B cell (primary cell): ENCODE measurements at regions of chr19 and their contacts with region 1.

Region 1: DNA sequence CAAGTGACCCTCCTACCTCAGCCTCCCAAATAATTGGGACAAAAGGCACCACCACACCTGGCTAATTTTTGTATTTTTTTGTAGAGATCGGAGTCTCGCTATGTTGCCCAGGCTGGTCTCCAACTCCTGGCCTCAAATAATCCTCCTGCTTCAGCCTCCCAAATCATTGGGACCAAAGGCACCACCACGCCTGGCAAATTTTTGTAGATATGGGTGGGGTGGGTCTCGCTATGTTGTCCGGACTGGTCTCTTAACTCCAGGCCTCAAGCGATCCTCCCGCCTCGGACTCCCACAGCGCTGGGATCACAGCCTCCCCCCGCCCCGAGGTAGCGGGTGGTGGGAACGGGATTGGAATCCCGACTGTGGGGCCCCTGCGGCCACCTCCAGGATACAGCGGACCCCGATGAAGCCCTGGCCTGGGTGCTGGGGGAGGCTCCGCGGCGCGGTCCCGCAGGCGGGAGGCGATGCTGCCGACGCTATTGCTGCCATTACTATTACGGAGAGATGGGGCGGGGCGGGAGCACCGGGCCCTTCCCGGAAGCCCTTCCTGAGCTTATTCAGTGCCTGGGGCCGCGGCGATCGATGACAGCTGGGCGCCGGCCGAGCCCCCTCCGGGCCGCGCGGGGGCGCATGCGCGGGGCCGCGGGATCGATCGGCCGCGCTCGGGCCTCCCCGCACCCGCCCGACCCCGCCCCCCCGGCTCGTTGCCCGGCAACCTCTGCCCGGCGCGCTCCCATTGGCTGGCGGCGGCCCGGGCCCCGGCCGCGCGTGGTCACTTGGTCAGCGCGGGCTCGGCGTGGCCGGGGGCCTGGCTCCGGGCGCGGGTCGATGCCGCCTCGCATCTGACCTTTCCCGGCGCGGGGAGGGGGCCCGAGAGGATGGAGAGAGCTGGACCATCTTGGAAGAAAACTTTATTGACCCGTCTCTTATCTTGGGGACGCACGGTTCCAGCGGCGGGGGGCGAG is 27.9 kb upstream of the ONECUT3 start:
- DNase-seq: peak; percentile 52
- ATAC-seq: peak; percentile 53
- H3K4me3 ChIP-seq: peak overlapping the region in 3 of 5 experiments; percentile 23 to 36 (median 26)
- H3K4me3 Mint-ChIP-seq: peak overlapping the region; percentile 49
- H3K27ac ChIP-seq: no peak overlapping the region
- H3K27ac Mint-ChIP-seq: no peak overlapping the region
- H3K4me1 ChIP-seq: peaks cover 11 to 12% of the 10 kb centered on the region in 2 donors
- H3K4me1 Mint-ChIP-seq: peaks cover 3% of the 10 kb centered on the region
- H3K27me3 ChIP-seq: peaks cover 0 to 61% (median 16%) of the 10 kb centered on the region in 4 experiments
- H3K27me3 Mint-ChIP-seq: peaks cover 56% of the 10 kb centered on the region
- CTCF ChIP-seq: no peak

Region 2: DNA sequence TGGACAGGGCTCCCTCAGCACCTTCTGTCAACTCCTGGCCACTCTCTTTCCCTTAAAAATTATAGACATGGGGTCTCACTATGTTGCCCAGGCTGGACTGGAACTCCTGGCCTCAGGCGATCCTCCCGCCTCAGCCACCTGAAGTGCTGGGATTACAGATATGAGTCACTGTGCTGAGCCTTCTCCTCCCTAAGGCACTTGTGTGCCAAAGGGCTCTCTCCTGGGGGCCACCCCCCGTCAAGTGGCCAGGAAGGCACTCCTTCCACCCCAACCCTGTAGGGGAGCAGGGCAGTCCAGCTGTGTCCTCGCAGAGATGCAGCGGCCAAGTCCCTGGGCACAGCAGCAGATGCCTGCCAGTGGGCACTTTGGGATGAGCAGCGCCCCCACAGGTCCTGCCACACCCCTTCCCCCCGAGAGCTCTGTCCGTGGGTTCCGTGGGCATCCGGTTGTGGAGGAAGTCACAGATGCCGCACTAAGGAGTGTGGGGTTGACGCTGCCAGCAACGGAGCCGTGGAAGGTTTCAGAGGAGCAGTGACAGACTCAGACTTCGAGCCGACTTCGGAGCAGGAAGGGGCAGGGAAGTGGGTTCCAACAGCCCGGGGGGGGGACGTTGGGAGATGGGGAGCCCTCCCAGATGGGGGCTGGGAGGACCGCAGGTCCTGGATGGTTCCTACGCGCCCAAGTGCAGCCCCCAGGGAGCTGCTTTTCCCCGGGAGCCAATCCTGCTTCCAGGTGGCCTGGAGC is 116.9 kb before region 1 on chr19:
- CTCF ChIA-PET with region 1: no interaction called
- POLR2A ChIA-PET with region 1: no interaction called
- intact Hi-C with region 1: no loop called
- DNase-seq: peak; percentile 44
- ATAC-seq: no peak
- H3K4me3 ChIP-seq: peak overlapping the region in 1 of 5 experiments; percentile 29
- H3K4me3 Mint-ChIP-seq: peak overlapping the region; percentile 39
- H3K27ac ChIP-seq: peak overlapping the region in 1 of 2 donors; percentile 48
- H3K27ac Mint-ChIP-seq: peak overlapping the region; percentile 72
- H3K4me1 ChIP-seq: peaks cover 31 to 47% of the 10 kb centered on the region in 2 donors
- H3K4me1 Mint-ChIP-seq: peaks cover 42% of the 10 kb centered on the region
- H3K27me3 ChIP-seq: no peaks in the 10 kb centered on the region
- H3K27me3 Mint-ChIP-seq: no peaks in the 10 kb centered on the region
- CTCF ChIP-seq: no peak

Region 3: GRCh38 chr19:1680976-1681375 is 44.4 kb before region 1 on chr19:
- CTCF ChIA-PET with region 1: no interaction called
- POLR2A ChIA-PET with region 1: no interaction called
- intact Hi-C with region 1: no loop called
- DNase-seq: no peak
- ATAC-seq: no peak
- H3K4me3 ChIP-seq: no peak overlapping the region
- H3K4me3 Mint-ChIP-seq: no peak overlapping the region
- H3K27ac ChIP-seq: no peak overlapping the region
- H3K27ac Mint-ChIP-seq: no peak overlapping the region
- H3K4me1 ChIP-seq: peaks cover 0 to 1% of the 10 kb centered on the region in 2 donors
- H3K4me1 Mint-ChIP-seq: no peaks in the 10 kb centered on the region
- H3K27me3 ChIP-seq: peaks cover 0 to 54% (median 17%) of the 10 kb centered on the region in 4 experiments
- H3K27me3 Mint-ChIP-seq: peaks cover 41% of the 10 kb centered on the region
- CTCF ChIP-seq: no peak

Region 4: GRCh38 chr19:1736927-1737326 is 11.5 kb after region 1 on chr19:
- CTCF ChIA-PET with region 1: no interaction called
- POLR2A ChIA-PET with region 1: no interaction called
- intact Hi-C with region 1: no loop called
- DNase-seq: no peak
- ATAC-seq: no peak
- H3K4me3 ChIP-seq: no peak overlapping the region
- H3K4me3 Mint-ChIP-seq: no peak overlapping the region
- H3K27ac ChIP-seq: no peak overlapping the region
- H3K27ac Mint-ChIP-seq: no peak overlapping the region
- H3K4me1 ChIP-seq: no peaks in the 10 kb centered on the region
- H3K4me1 Mint-ChIP-seq: no peaks in the 10 kb centered on the region
- H3K27me3 ChIP-seq: peaks cover 0 to 49% (median 10%) of the 10 kb centered on the region in 4 experiments
- H3K27me3 Mint-ChIP-seq: peaks cover 37% of the 10 kb centered on the region
- CTCF ChIP-seq: no peak

Region 5: DNA sequence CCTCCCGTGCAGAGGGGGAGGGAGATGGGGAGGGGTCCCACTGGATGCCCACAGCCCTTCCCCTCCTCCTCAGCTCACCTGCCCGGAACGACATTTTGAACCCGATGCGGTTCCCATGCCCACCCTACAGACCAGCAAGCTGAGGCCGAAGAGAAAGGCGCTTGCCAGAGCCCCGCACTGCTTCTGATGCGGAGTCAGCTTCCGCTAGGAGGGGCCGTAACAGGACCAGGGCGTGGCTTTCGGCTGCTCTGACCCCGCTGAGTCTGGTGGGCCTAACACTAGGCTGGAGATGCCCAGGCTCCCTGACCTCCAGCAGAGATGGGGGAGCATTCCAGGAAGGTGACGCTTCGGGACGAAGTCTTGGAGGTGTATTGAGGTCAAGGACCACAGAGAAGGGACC is 34.6 kb after region 1 on chr19:
- CTCF ChIA-PET with region 1: no interaction called
- POLR2A ChIA-PET with region 1: no interaction called
- intact Hi-C with region 1: no loop called
- DNase-seq: peak; percentile 24
- ATAC-seq: no peak
- H3K4me3 ChIP-seq: no peak overlapping the region
- H3K4me3 Mint-ChIP-seq: no peak overlapping the region
- H3K27ac ChIP-seq: no peak overlapping the region
- H3K27ac Mint-ChIP-seq: no peak overlapping the region
- H3K4me1 ChIP-seq: peaks cover 30 to 35% of the 10 kb centered on the region in 2 donors
- H3K4me1 Mint-ChIP-seq: peaks cover 12% of the 10 kb centered on the region
- H3K27me3 ChIP-seq: peaks cover 0 to 95% (median 65%) of the 10 kb centered on the region in 4 experiments
- H3K27me3 Mint-ChIP-seq: peaks cover 43% of the 10 kb centered on the region
- CTCF ChIP-seq: no peak

Region 6: GRCh38 chr19:3372413-3372812 is 1647.0 kb after region 1 on chr19:
- CTCF ChIA-PET with region 1: no interaction called
- POLR2A ChIA-PET with region 1: interaction called, 11 read pairs
- intact Hi-C with region 1: no loop called
- DNase-seq: no peak
- ATAC-seq: no peak
- H3K4me3 ChIP-seq: no peak overlapping the region
- H3K4me3 Mint-ChIP-seq: no peak overlapping the region
- H3K27ac ChIP-seq: no peak overlapping the region
- H3K27ac Mint-ChIP-seq: no peak overlapping the region
- H3K4me1 ChIP-seq: peaks cover 20% of the 10 kb centered on the region in 2 donors
- H3K4me1 Mint-ChIP-seq: peaks cover 34% of the 10 kb centered on the region
- H3K27me3 ChIP-seq: peaks cover 0 to 3% (median 1%) of the 10 kb centered on the region in 4 experiments
- H3K27me3 Mint-ChIP-seq: peaks cover 12% of the 10 kb centered on the region
- CTCF ChIP-seq: no peak